Panc1 (cell line): ENCODE measurements at regions of chr18 and their contacts with region 1.

Region 1: GRCh38 chr18:36095936-36096519 is 28.7 kb upstream of the RPRD1A start:
- DNase-seq: peak; percentile 25
- ATAC-seq: no peak
- H3K4me3 ChIP-seq: no peak overlapping the region
- H3K27ac ChIP-seq: no peak overlapping the region
- H3K4me1 ChIP-seq: no peaks in the 10 kb centered on the region
- H3K27me3 ChIP-seq: no peaks in the 10 kb centered on the region
- CTCF ChIP-seq: peak; percentile 37; the same call in 1 of the 2 replicates

Region 2: DNA sequence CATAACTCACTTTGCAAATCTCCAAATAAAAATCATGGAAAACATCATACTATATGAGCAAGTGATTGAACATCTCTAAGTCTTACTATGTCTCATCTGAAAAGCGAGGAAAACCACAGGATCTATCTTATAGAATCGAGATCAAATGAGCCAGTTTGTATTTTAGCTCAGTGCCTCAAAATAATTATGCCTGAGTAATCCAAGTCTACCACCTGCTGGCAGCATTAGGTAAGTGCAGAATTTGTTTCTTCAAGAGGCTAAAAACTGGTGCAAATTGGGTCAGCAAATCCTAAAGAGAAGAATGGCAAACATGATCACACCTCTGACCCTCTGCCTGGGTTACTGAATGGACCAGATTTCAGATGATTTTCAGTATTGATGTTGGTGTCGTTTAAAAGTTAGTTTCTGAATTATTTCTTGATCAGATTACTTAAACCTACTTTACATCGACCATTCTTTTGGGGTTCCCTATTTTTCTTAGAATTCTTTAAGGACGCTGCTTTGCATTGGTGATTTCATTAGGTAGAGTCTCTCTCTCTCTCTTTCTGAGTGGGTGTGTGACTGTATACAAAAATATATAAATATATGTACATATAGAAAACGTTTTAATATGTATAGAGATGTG is 188.8 kb after region 1 on chr18:
- CTCF ChIA-PET with region 1: interaction called, 4 read pairs
- POLR2A ChIA-PET with region 1: no interaction called
- in situ Hi-C with region 1: no loop called
- intact Hi-C with region 1: loop called (anchors 5 kb)
- DNase-seq: peak; percentile 59
- ATAC-seq: peak; percentile 72
- H3K4me3 ChIP-seq: no peak overlapping the region
- H3K27ac ChIP-seq: no peak overlapping the region
- H3K4me1 ChIP-seq: no peaks in the 10 kb centered on the region
- H3K27me3 ChIP-seq: no peaks in the 10 kb centered on the region; the same call in 1 of the 2 replicates
- CTCF ChIP-seq: peak; percentile 81

Region 3: DNA sequence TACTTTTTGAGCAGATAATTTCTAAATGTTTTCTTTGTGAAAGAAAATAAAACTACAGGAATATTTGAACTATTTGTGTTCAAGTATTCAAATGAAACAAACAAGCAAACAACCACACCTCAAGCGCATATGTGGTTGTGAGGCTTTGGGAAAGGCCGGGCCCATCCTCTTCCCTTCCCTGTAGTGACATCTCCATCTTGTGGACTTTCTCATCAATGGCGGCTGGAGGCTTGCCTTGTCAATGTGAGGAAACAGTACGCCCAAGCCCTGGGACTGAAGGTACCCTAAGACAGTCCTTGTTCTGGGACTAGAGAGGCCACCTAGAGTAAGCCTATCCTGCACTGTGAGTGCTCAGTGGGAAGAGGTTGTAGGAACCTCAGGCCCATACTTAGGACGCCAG is 566.0 kb after region 1 on chr18:
- CTCF ChIA-PET with region 1: no interaction called
- POLR2A ChIA-PET with region 1: no interaction called
- in situ Hi-C with region 1: no loop called
- intact Hi-C with region 1: no loop called
- DNase-seq: no peak
- ATAC-seq: no peak
- H3K4me3 ChIP-seq: no peak overlapping the region
- H3K27ac ChIP-seq: no peak overlapping the region
- H3K4me1 ChIP-seq: no peaks in the 10 kb centered on the region
- H3K27me3 ChIP-seq: no peaks in the 10 kb centered on the region
- CTCF ChIP-seq: 0 out of 2 replicates have a peak, but pooled peaks have one; percentile 17